CD4-positive, alpha-beta T cell (primary cell): ENCODE measurements at regions of chr20 and their contacts with region 1.

Region 1: DNA sequence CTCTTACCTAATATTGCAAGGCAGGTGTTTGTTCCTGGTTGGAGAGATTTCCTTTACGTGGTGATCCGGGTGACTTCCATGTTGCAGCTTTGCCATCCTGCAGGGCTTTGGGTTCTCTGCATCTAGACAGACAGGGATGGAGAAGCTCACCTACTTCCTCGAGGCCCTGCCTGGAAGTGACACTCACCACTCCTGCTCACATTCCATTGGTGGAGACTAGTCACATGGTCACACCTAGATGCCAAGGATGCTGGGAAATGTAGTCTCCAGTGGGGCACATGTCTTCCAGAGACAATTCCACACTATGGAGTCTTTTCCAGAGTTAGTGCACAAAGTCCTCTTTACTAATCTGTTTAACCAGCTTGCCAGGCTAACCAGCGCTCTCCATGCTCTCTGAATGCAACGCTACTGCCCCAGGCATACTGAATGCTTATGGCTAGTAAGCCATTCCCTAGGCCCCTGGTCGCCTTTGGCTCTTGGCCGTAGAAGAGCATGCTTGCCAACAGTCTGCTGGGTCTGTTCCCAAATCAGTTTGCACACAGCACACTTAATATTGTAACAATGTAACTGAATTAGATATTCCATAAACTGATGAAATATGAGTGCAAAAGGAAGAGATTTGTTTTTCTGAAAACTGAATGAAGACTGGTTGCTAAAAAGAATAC is 6.7 kb upstream of the KCNK15 start:
- DNase-seq: peak in 9 of 14 experiments; percentile 5 to 79 (median 34)
- ATAC-seq: peak; percentile 64
- H3K4me3 ChIP-seq: no peak overlapping the region
- H3K4me3 Mint-ChIP-seq: peak overlapping the region; percentile 34
- H3K27ac ChIP-seq: no peak overlapping the region
- H3K27ac Mint-ChIP-seq: no peak overlapping the region
- H3K4me1 ChIP-seq: peaks cover 9% of the 10 kb centered on the region
- H3K4me1 Mint-ChIP-seq: peaks cover 16% of the 10 kb centered on the region
- H3K27me3 ChIP-seq: no peaks in the 10 kb centered on the region
- H3K27me3 Mint-ChIP-seq: peaks cover 5% of the 10 kb centered on the region
- CTCF ChIP-seq: no peak

Region 2: GRCh38 chr20:43584448-43585136 is 1154.4 kb before region 1 on chr20:
- CTCF ChIA-PET with region 1: no interaction called
- POLR2A ChIA-PET with region 1: no interaction called
- intact Hi-C with region 1: loop called in 1 of 2 experiments (anchors 5 kb)
- DNase-seq: no peak
- ATAC-seq: no peak
- H3K4me3 ChIP-seq: no peak overlapping the region
- H3K4me3 Mint-ChIP-seq: no peak overlapping the region
- H3K27ac ChIP-seq: no peak overlapping the region
- H3K27ac Mint-ChIP-seq: no peak overlapping the region
- H3K4me1 ChIP-seq: peaks cover under 1% of the 10 kb centered on the region
- H3K4me1 Mint-ChIP-seq: peaks cover under 1% of the 10 kb centered on the region
- H3K27me3 ChIP-seq: no peaks in the 10 kb centered on the region
- H3K27me3 Mint-ChIP-seq: peaks cover 9% of the 10 kb centered on the region
- CTCF ChIP-seq: no peak

Region 3: GRCh38 chr20:43761386-43762340 is 977.3 kb before region 1 on chr20:
- CTCF ChIA-PET with region 1: no interaction called
- POLR2A ChIA-PET with region 1: no interaction called
- intact Hi-C with region 1: no loop called
- DNase-seq: peak in 1 of 14 experiments; percentile 21
- ATAC-seq: peak; percentile 26
- H3K4me3 ChIP-seq: no peak overlapping the region
- H3K4me3 Mint-ChIP-seq: no peak overlapping the region
- H3K27ac ChIP-seq: no peak overlapping the region
- H3K27ac Mint-ChIP-seq: no peak overlapping the region
- H3K4me1 ChIP-seq: no peaks in the 10 kb centered on the region
- H3K4me1 Mint-ChIP-seq: no peaks in the 10 kb centered on the region
- H3K27me3 ChIP-seq: no peaks in the 10 kb centered on the region
- H3K27me3 Mint-ChIP-seq: no peaks in the 10 kb centered on the region
- CTCF ChIP-seq: no peak

Region 4: DNA sequence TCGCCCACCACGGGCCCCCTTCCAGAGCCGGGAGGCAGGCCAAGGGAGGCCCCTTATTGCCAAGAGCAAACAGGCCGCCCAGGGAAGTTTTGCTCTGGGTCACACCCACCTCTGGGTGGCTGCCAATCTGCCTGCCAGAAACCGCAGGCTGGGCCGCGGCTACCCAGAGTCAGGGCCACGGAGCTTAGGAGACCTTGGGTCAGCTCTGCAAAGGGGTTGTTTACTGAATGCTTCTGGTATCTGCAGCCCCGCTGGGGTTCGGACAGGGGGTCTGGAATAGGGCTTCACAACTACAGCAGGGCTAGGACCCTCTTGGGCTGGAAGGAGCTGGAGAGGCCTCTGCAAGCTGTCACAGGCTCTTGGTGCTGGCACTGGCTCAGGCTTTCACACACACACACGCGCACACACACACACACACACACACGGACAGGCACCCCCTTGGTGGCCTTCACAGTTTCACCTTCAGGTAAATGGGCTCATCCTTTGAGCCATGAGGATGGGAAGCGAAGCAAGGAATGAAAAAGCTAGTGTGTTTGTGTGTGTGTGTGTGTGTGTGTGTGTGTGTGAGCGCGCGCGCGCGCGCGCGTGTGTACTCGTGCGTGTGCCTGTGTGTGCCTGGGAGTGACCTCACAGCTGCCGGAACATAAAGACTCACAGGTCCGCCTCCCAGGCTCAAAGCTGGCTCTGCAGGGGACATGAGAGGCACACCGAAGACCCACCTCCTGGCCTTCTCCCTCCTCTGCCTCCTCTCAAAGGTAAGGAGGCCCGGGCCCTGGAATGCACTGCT is 24.1 kb before region 1 on chr20 and contains the start of gene CCN5:
- CTCF ChIA-PET with region 1: no interaction called
- POLR2A ChIA-PET with region 1: no interaction called
- intact Hi-C with region 1: no loop called
- DNase-seq: no peak
- ATAC-seq: no peak
- H3K4me3 ChIP-seq: no peak within 1 kb of the TSS
- H3K4me3 Mint-ChIP-seq: no peak within 1 kb of the TSS
- H3K27ac ChIP-seq: no peak within 1 kb of the TSS
- H3K27ac Mint-ChIP-seq: no peak within 1 kb of the TSS
- H3K4me1 ChIP-seq: peaks cover 6% of the 10 kb centered on the region
- H3K4me1 Mint-ChIP-seq: no peaks in the 10 kb centered on the region
- H3K27me3 ChIP-seq: no peaks in the 10 kb centered on the region
- H3K27me3 Mint-ChIP-seq: no peaks in the 10 kb centered on the region
- CTCF ChIP-seq: no peak
- total RNA-seq, gene CCN5: not detected

Region 5: GRCh38 chr20:44754542-44754941 is 15.6 kb after region 1 on chr20:
- CTCF ChIA-PET with region 1: no interaction called
- POLR2A ChIA-PET with region 1: no interaction called
- intact Hi-C with region 1: no loop called
- DNase-seq: no peak
- ATAC-seq: no peak
- H3K4me3 ChIP-seq: no peak overlapping the region
- H3K4me3 Mint-ChIP-seq: no peak overlapping the region
- H3K27ac ChIP-seq: no peak overlapping the region
- H3K27ac Mint-ChIP-seq: no peak overlapping the region
- H3K4me1 ChIP-seq: no peaks in the 10 kb centered on the region
- H3K4me1 Mint-ChIP-seq: no peaks in the 10 kb centered on the region
- H3K27me3 ChIP-seq: peaks cover 0 to 5% of the 10 kb centered on the region in 2 experiments
- H3K27me3 Mint-ChIP-seq: peaks cover 15% of the 10 kb centered on the region
- CTCF ChIP-seq: no peak

Region 6: GRCh38 chr20:44861531-44862006 is 122.6 kb after region 1 on chr20:
- CTCF ChIA-PET with region 1: no interaction called
- POLR2A ChIA-PET with region 1: no interaction called
- intact Hi-C with region 1: no loop called
- DNase-seq: no peak
- ATAC-seq: no peak
- H3K4me3 ChIP-seq: no peak overlapping the region
- H3K4me3 Mint-ChIP-seq: no peak overlapping the region
- H3K27ac ChIP-seq: no peak overlapping the region
- H3K27ac Mint-ChIP-seq: no peak overlapping the region
- H3K4me1 ChIP-seq: no peaks in the 10 kb centered on the region
- H3K4me1 Mint-ChIP-seq: peaks cover 5% of the 10 kb centered on the region
- H3K27me3 ChIP-seq: no peaks in the 10 kb centered on the region
- H3K27me3 Mint-ChIP-seq: no peaks in the 10 kb centered on the region
- CTCF ChIP-seq: no peak